K562 (cell line): ENCODE measurements at regions of chr3 and their contacts with region 1.

Region 1: DNA sequence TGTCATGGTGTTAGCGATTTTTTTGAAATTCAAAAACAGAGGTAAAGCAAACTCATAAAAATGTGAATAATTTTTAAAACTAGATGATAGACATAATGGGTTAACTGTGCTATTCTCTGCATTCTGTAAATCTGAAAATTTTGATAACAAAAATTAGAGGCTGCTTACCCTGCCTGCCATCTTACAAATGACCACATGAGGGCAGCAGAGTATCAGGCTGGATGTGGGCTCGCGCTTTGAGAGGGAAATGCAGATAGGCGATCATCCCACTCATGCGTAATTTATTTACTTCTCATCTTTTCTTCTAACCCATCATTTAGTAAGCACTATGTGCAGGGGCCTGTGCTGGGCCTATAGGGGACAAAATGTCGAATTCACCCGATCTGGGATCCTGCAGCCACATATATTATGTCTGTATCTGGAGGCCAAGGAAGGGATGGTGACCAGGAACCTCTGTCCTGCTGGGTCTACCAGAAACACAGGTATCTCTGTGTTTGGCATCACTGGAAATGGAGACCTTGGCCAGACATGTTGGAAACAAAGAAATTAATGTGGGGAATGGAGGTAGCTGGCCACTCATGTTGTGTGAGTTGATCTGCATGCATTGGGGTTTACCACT is 7.8 kb upstream of the RAD18 start:
- DNase-seq: peak; percentile 76 to 82 (median 78)
- ATAC-seq: peak; percentile 70
- H3K4me3 ChIP-seq: no peak overlapping the region
- H3K27ac ChIP-seq: no peak overlapping the region
- H3K4me1 ChIP-seq: peaks cover 0 to 5% of the 10 kb centered on the region in 2 experiments; a peak in 1 of 5 replicates
- H3K27me3 ChIP-seq: peaks cover 3 to 14% of the 10 kb centered on the region in 2 experiments; a peak in 4 of 5 replicates
- CTCF ChIP-seq: peak; percentile 90 to 98 (median 94)
- EP300 ChIP-seq: no peak
- POLR2A ChIP-seq: no peak
- RAD21 ChIP-seq: peak; percentile 96 to 98

Region 2: GRCh38 chr3:9308298-9308990 is 337.4 kb after region 1 on chr3:
- CTCF ChIA-PET with region 1: interaction called, 35 read pairs
- POLR2A ChIA-PET with region 1: no interaction called
- in situ Hi-C with region 1: loop called (anchors 5 kb)
- intact Hi-C with region 1: no loop called
- DNase-seq: no peak
- ATAC-seq: no peak
- H3K4me3 ChIP-seq: no peak overlapping the region
- H3K27ac ChIP-seq: no peak overlapping the region
- H3K4me1 ChIP-seq: no peaks in the 10 kb centered on the region
- H3K27me3 ChIP-seq: peaks cover 9 to 39% of the 10 kb centered on the region in 2 experiments
- CTCF ChIP-seq: no peak
- EP300 ChIP-seq: no peak
- POLR2A ChIP-seq: no peak
- RAD21 ChIP-seq: no peak

Region 3: GRCh38 chr3:9497821-9498565 is 526.9 kb after region 1 on chr3:
- CTCF ChIA-PET with region 1: no interaction called
- POLR2A ChIA-PET with region 1: no interaction called
- in situ Hi-C with region 1: loop called (anchors 10 kb)
- intact Hi-C with region 1: no loop called
- DNase-seq: no peak
- ATAC-seq: no peak
- H3K4me3 ChIP-seq: no peak overlapping the region
- H3K27ac ChIP-seq: no peak overlapping the region
- H3K4me1 ChIP-seq: peaks cover 6 to 8% of the 10 kb centered on the region in 2 experiments; a peak in 3 of 5 replicates
- H3K27me3 ChIP-seq: peaks cover 4 to 27% of the 10 kb centered on the region in 2 experiments; a peak in 4 of 5 replicates
- CTCF ChIP-seq: no peak
- EP300 ChIP-seq: no peak
- POLR2A ChIP-seq: no peak
- RAD21 ChIP-seq: no peak